MCF 10A (cell line): ENCODE measurements at regions of chrX and their contacts with region 1.

Region 1: GRCh38 chrX:37926700-37927099 is 79.3 kb upstream of the DYNLT3 start:
- DNase-seq: peak; percentile 45
- H3K4me3 Mint-ChIP-seq: no peak overlapping the region
- H3K27ac Mint-ChIP-seq: no peak overlapping the region
- H3K4me1 Mint-ChIP-seq: no peaks in the 10 kb centered on the region
- H3K27me3 Mint-ChIP-seq: peaks cover 46% of the 10 kb centered on the region
- CTCF ChIP-seq: peak; percentile 52

Region 2: GRCh38 chrX:37638047-37638446 is 288.7 kb before region 1 on chrX:
- CTCF ChIA-PET with region 1: no interaction called
- POLR2A ChIA-PET with region 1: no interaction called
- intact Hi-C with region 1: no loop called
- DNase-seq: no peak
- H3K4me3 Mint-ChIP-seq: no peak overlapping the region
- H3K27ac Mint-ChIP-seq: no peak overlapping the region
- H3K4me1 Mint-ChIP-seq: no peaks in the 10 kb centered on the region
- H3K27me3 Mint-ChIP-seq: peaks cover 5% of the 10 kb centered on the region
- CTCF ChIP-seq: no peak

Region 3: DNA sequence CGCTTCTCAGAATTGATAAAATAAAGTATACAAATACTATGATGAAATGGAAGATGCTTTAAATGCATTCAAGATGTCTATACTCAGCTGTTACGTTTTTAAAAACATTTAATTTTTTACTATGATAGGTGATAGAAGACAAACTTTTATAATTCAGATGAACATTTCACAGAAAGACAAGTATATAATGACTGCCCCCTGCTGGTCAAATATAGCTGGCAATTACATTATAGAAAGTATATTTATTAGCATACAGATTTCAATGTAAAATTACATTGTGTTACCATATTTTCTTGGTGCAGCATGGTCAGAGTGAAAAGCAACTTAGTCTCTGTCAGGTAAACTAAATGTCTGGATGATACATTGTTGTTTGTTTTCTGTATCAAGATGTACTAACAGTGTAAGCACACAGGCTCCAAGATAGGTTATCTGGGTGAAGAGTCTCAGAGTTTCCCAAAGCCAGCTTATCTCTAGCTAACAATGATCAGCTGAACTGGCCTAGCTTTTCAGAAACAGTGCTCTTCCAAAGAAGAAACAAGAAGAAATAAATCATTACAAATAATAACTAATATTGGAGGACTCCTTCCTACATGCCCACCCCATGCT is 239.9 kb after region 1 on chrX:
- CTCF ChIA-PET with region 1: interaction called, 119 read pairs
- POLR2A ChIA-PET with region 1: interaction called, 3 read pairs
- intact Hi-C with region 1: loop called (anchors 1 kb)
- DNase-seq: peak; percentile 52
- H3K4me3 Mint-ChIP-seq: no peak overlapping the region
- H3K27ac Mint-ChIP-seq: no peak overlapping the region
- H3K4me1 Mint-ChIP-seq: no peaks in the 10 kb centered on the region
- H3K27me3 Mint-ChIP-seq: peaks cover 47% of the 10 kb centered on the region
- CTCF ChIP-seq: peak; percentile 49

Region 4: DNA sequence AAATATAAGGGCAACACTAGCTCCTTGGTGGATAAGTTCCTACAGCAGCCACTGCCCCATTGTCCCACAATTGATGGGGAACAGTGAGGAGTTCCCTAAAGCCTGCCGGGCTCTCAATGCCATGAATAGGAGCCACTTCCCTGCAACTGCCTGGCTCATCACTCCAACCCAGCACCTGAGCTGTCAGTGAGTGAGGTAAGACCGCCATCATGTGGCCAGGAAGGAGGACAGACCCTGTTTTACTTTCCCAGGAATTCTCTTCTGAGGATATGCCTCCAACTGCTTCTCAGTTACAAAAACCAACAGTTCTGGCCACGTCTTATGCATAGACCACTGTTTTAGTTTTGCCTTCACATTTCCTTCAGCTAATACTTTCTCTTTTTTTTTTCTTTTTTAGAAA is 248.4 kb after region 1 on chrX:
- CTCF ChIA-PET with region 1: interaction called, 69 read pairs
- POLR2A ChIA-PET with region 1: no interaction called
- intact Hi-C with region 1: loop called (anchors 2 kb)
- DNase-seq: peak; percentile 62
- H3K4me3 Mint-ChIP-seq: no peak overlapping the region
- H3K27ac Mint-ChIP-seq: peak overlapping the region; percentile 47
- H3K4me1 Mint-ChIP-seq: no peaks in the 10 kb centered on the region
- H3K27me3 Mint-ChIP-seq: peaks cover 59% of the 10 kb centered on the region
- CTCF ChIP-seq: peak; percentile 82